Endothelial cell of umbilical vein (primary cell): ENCODE measurements at regions of chr11 and their contacts with region 1.

Region 1: GRCh38 chr11:117634756-117635603 is 162.0 kb downstream of the DSCAML1 start:
- DNase-seq: no peak
- H3K4me3 ChIP-seq: no peak overlapping the region
- H3K27ac ChIP-seq: no peak overlapping the region
- H3K4me1 ChIP-seq: no peaks in the 10 kb centered on the region
- H3K27me3 ChIP-seq: no peaks in the 10 kb centered on the region
- CTCF ChIP-seq: no peak
- POLR2A ChIP-seq: no peak

Region 2: DNA sequence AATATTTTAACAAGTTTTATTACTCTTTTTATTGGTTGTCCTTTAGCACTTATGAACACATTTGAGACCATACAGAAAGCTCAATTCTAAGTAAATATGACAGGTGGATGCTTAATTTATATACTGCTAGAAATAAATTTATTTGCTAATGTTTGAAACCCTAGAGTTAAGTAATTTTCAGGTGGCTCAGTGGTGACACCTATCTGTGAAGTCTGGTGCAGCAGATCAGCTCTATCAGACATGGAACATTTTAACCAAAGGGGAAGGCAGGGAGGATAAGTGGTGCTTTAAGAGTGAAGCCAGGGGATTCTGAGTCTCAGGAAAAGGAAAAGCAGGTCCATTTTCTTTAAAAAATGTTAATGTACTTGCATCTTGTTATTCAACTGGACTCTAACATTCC is 13.8 kb before region 1 on chr11:
- CTCF ChIA-PET with region 1: interaction called, 24 read pairs
- POLR2A ChIA-PET with region 1: no interaction called
- dilution Hi-C with region 1: no loop called
- intact Hi-C with region 1: no loop called
- DNase-seq: peak; percentile 15
- H3K4me3 ChIP-seq: no peak overlapping the region
- H3K27ac ChIP-seq: no peak overlapping the region
- H3K4me1 ChIP-seq: no peaks in the 10 kb centered on the region
- H3K27me3 ChIP-seq: no peaks in the 10 kb centered on the region
- CTCF ChIP-seq: peak; percentile 29 to 41
- POLR2A ChIP-seq: no peak